ENCODE measurements at regions of chr17 and their contacts with region 1.

Region 1: DNA sequence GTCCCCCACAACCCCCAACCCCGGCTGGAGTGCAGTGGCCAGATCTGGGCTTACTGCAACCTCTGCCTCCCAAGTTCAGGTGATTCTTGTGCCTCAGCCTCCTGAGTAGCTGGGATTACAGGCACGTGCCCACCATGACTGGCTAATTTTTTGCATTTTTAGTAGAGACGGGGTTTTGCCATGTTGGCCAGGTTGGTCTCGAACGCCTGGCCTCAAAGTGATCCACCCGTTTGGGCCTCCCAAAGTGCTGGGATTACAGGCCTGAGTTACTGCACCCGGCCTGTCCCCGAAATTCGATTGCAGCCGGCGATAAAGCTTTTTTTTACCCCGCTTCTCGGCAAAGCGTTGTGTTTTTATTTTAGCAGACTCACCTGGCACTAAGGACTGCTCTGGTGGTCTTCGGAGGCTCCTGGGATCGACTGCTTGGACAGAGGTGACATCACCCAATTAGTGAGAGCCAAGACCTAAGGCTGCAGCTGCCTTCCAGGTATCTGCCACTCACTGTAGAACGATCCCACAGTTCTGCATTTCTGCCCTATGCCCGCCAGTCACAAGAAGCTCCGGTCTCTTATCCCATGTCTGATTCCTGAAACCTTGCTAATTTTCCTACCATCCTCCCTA is 82.2 kb upstream of the ARL4D start:
- DNase-seq: peak; percentile 78
- ATAC-seq: no peak
- H3K4me3 ChIP-seq: peak overlapping the region in 1 of 5 experiments; percentile 25
- H3K4me3 Mint-ChIP-seq: peak overlapping the region; percentile 29
- H3K27ac ChIP-seq: peak overlapping the region in 1 of 2 donors; percentile 46
- H3K27ac Mint-ChIP-seq: no peak overlapping the region
- H3K4me1 ChIP-seq: peaks cover 0 to 4% of the 10 kb centered on the region in 2 donors
- H3K4me1 Mint-ChIP-seq: peaks cover 16% of the 10 kb centered on the region
- H3K27me3 ChIP-seq: no peaks in the 10 kb centered on the region
- H3K27me3 Mint-ChIP-seq: no peaks in the 10 kb centered on the region
- CTCF ChIP-seq: no peak

Region 2: GRCh38 chr17:43349142-43349541 is 32.5 kb after region 1 on chr17:
- CTCF ChIA-PET with region 1: no interaction called
- POLR2A ChIA-PET with region 1: no interaction called
- intact Hi-C with region 1: no loop called
- DNase-seq: no peak
- ATAC-seq: no peak
- H3K4me3 ChIP-seq: no peak overlapping the region
- H3K4me3 Mint-ChIP-seq: no peak overlapping the region
- H3K27ac ChIP-seq: no peak overlapping the region
- H3K27ac Mint-ChIP-seq: no peak overlapping the region
- H3K4me1 ChIP-seq: no peaks in the 10 kb centered on the region
- H3K4me1 Mint-ChIP-seq: no peaks in the 10 kb centered on the region
- H3K27me3 ChIP-seq: no peaks in the 10 kb centered on the region
- H3K27me3 Mint-ChIP-seq: no peaks in the 10 kb centered on the region
- CTCF ChIP-seq: no peak

Region 3: DNA sequence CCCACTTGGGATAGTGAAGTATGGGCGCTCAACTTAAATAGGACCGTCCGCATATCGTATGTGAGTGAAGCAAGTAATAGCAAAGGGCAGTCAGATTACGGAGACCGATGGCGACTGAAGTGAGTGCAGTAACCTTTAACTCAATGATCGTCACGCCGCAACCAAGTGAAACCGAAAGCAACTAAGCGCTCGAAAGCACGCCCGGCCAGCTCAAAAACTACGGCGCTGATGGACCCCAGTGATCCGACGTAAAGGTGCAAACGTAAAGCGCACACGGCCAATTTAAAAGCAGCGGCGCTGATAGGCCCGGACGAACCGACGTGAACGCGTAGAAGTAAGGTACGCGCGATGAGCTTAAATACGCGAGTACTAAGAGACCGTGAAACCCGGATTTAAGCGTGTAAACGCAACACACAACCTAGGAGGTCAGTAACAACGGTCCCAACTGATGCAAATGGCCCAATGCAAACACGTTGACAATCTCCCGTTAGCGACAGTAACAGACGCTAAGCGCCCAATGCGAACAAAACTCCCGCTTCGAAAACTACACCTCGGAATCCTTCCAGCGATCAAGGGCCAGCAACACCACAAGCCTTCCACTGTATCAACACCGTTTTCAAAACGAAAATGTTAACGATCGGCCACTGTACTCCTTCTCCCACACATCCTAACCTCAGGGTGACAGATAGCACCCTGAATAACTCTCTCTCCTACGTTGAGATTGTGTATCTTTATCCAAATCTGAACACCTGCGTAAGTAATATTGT is 44.3 kb after region 1 on chr17:
- CTCF ChIA-PET with region 1: interaction called, 4 read pairs
- POLR2A ChIA-PET with region 1: interaction called, 41 read pairs
- intact Hi-C with region 1: no loop called
- DNase-seq: peak; percentile 94
- ATAC-seq: peak; percentile 80
- H3K4me3 ChIP-seq: peak overlapping the region; percentile 61 to 88 (median 70)
- H3K4me3 Mint-ChIP-seq: peak overlapping the region; percentile 96
- H3K27ac ChIP-seq: peak overlapping the region; percentile 97 to 99
- H3K27ac Mint-ChIP-seq: peak overlapping the region; percentile 100
- H3K4me1 ChIP-seq: peaks cover 9 to 15% of the 10 kb centered on the region in 2 donors
- H3K4me1 Mint-ChIP-seq: peaks cover 21% of the 10 kb centered on the region
- H3K27me3 ChIP-seq: no peaks in the 10 kb centered on the region
- H3K27me3 Mint-ChIP-seq: no peaks in the 10 kb centered on the region
- CTCF ChIP-seq: no peak

Region 4: DNA sequence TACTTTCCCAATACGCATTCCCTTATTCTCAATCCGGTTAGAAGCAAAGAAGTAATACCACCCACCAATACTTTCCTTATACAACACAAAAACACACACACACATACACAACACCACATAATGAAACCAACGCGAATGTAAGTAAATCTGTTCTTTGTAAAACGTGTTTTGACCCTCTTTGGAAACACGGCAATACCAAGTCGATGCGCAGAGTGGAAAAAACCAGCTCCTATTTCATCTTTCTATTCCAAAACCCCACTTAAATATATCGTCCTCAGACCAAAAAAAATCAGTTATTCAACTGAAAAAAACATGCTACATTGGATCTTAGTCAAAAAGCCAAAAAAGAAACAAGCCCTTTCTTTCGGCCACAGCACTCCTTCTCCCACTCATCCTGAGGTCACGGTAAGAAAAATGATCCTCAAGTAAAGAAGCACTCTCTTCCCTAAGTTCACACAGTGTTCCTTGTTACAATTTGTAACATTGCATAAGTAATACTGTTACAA is 51.2 kb after region 1 on chr17:
- CTCF ChIA-PET with region 1: no interaction called
- POLR2A ChIA-PET with region 1: interaction called, 53 read pairs
- intact Hi-C with region 1: loop called (anchors 2 kb)
- DNase-seq: no peak
- ATAC-seq: peak; percentile 40
- H3K4me3 ChIP-seq: peak overlapping the region; percentile 59 to 84 (median 64)
- H3K4me3 Mint-ChIP-seq: peak overlapping the region; percentile 99
- H3K27ac ChIP-seq: peak overlapping the region; percentile 96 to 98
- H3K27ac Mint-ChIP-seq: peak overlapping the region; percentile 100
- H3K4me1 ChIP-seq: peaks cover 33 to 50% of the 10 kb centered on the region in 2 donors
- H3K4me1 Mint-ChIP-seq: peaks cover 44% of the 10 kb centered on the region
- H3K27me3 ChIP-seq: no peaks in the 10 kb centered on the region
- H3K27me3 Mint-ChIP-seq: no peaks in the 10 kb centered on the region
- CTCF ChIP-seq: no peak

Region 5: GRCh38 chr17:43546319-43547188 is 229.9 kb after region 1 on chr17 and contains the start of gene ETV4:
- CTCF ChIA-PET with region 1: no interaction called
- POLR2A ChIA-PET with region 1: no interaction called
- intact Hi-C with region 1: no loop called
- DNase-seq: peak; percentile 87
- ATAC-seq: peak; percentile 95
- H3K4me3 ChIP-seq: peak within 1 kb of the TSS; percentile 21 to 74 (median 56)
- H3K4me3 Mint-ChIP-seq: peak within 1 kb of the TSS; percentile 87
- H3K27ac ChIP-seq: no peak within 1 kb of the TSS
- H3K27ac Mint-ChIP-seq: no peak within 1 kb of the TSS
- H3K4me1 ChIP-seq: peaks cover 21 to 28% of the 10 kb centered on the region in 2 donors
- H3K4me1 Mint-ChIP-seq: peaks cover 24% of the 10 kb centered on the region
- H3K27me3 ChIP-seq: peaks cover 0 to 65% (median 34%) of the 10 kb centered on the region in 4 experiments
- H3K27me3 Mint-ChIP-seq: peaks cover 57% of the 10 kb centered on the region
- CTCF ChIP-seq: no peak
- total RNA-seq, gene ETV4: not detected in 2 replicates